HEK293 (cell line): ENCODE measurements at regions of chr15 and their contacts with region 1.

Region 1: GRCh38 chr15:89575146-89575655 is at the start of gene TICRR:
- H3K4me3 ChIP-seq: peak within 1 kb of the TSS; percentile 67
- H3K27ac ChIP-seq: peak within 1 kb of the TSS; percentile 83
- H3K4me1 ChIP-seq: peaks cover 12% of the 10 kb centered on the region
- CTCF ChIP-seq: no peak

Region 2: GRCh38 chr15:89334510-89335288 is 240.5 kb before region 1 on chr15 and contains the start of gene POLG:
- CTCF ChIA-PET with region 1: no interaction called
- POLR2A ChIA-PET with region 1: interaction called, 13 read pairs
- H3K4me3 ChIP-seq: peak within 1 kb of the TSS; percentile 95
- H3K27ac ChIP-seq: peak within 1 kb of the TSS; percentile 62
- H3K4me1 ChIP-seq: peaks cover 10% of the 10 kb centered on the region
- CTCF ChIP-seq: no peak

Region 3: DNA sequence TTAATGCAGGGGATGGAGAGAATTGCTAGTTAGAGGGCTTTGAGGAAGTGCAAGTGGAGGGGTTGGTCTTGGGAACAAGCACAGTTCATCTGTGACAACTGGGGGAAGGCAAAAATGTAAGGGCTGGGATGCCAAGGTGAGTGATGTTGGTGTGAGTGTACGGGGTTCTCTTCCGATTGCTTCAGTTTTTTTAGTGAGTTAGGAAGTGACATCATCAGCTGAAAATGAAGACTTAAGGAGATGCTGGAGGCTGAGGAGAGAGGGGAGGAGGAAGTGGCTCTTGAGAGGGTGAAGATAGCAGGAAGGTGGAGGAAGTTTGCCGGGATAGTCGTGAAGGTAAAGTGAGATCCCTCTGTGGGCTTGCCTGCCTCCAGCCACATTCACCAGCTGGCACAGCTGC is 12.8 kb after region 1 on chr15:
- CTCF ChIA-PET with region 1: no interaction called
- POLR2A ChIA-PET with region 1: interaction called, 27 read pairs
- H3K4me3 ChIP-seq: no peak overlapping the region
- H3K27ac ChIP-seq: no peak overlapping the region
- H3K4me1 ChIP-seq: no peaks in the 10 kb centered on the region; the same call in 1 of the 2 replicates
- CTCF ChIP-seq: no peak

Region 4: GRCh38 chr15:89593018-89593417 is 17.8 kb after region 1 on chr15:
- CTCF ChIA-PET with region 1: no interaction called
- POLR2A ChIA-PET with region 1: interaction called, 27 read pairs
- H3K4me3 ChIP-seq: no peak overlapping the region
- H3K27ac ChIP-seq: no peak overlapping the region
- H3K4me1 ChIP-seq: no peaks in the 10 kb centered on the region
- CTCF ChIP-seq: no peak

Region 5: DNA sequence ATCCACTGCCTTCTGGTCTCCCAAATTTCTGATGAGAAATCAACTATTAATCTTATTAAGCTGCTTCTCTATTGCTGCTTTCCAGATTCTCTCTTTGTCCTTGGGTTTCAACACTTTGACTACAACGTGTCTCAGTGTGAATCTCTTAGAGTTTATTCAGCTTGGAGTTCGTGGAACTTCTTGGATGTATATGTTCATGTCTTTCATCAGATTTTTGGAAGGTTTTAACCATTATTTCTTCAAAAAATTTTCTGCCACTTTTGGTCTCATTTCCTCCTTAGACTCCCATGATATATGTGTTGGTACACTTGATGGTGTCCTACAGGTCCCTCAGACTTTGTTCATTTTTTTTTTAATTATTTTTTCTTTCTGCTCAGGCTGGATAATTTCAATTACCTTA is 36.1 kb after region 1 on chr15:
- CTCF ChIA-PET with region 1: no interaction called
- POLR2A ChIA-PET with region 1: interaction called, 19 read pairs
- H3K4me3 ChIP-seq: no peak overlapping the region
- H3K27ac ChIP-seq: no peak overlapping the region
- H3K4me1 ChIP-seq: no peaks in the 10 kb centered on the region
- CTCF ChIP-seq: no peak